CD4-positive, alpha-beta T cell (primary cell): ENCODE measurements at regions of chr12 and their contacts with region 1.

Region 1: GRCh38 chr12:108562348-108563135 is at the start of gene ISCU:
- DNase-seq: peak; percentile 97 to 100 (median 99)
- ATAC-seq: peak; percentile 63
- H3K4me3 ChIP-seq: peak within 1 kb of the TSS; percentile 97
- H3K4me3 Mint-ChIP-seq: peak within 1 kb of the TSS; percentile 99
- H3K27ac ChIP-seq: peak within 1 kb of the TSS; percentile 92 to 94
- H3K27ac Mint-ChIP-seq: peak within 1 kb of the TSS; percentile 96
- H3K4me1 ChIP-seq: peaks cover 63% of the 10 kb centered on the region
- H3K4me1 Mint-ChIP-seq: peaks cover 74% of the 10 kb centered on the region
- H3K27me3 ChIP-seq: no peaks in the 10 kb centered on the region
- H3K27me3 Mint-ChIP-seq: no peaks in the 10 kb centered on the region
- CTCF ChIP-seq: no peak
- total RNA-seq, gene ISCU: 269 to 270 TPM

Region 2: DNA sequence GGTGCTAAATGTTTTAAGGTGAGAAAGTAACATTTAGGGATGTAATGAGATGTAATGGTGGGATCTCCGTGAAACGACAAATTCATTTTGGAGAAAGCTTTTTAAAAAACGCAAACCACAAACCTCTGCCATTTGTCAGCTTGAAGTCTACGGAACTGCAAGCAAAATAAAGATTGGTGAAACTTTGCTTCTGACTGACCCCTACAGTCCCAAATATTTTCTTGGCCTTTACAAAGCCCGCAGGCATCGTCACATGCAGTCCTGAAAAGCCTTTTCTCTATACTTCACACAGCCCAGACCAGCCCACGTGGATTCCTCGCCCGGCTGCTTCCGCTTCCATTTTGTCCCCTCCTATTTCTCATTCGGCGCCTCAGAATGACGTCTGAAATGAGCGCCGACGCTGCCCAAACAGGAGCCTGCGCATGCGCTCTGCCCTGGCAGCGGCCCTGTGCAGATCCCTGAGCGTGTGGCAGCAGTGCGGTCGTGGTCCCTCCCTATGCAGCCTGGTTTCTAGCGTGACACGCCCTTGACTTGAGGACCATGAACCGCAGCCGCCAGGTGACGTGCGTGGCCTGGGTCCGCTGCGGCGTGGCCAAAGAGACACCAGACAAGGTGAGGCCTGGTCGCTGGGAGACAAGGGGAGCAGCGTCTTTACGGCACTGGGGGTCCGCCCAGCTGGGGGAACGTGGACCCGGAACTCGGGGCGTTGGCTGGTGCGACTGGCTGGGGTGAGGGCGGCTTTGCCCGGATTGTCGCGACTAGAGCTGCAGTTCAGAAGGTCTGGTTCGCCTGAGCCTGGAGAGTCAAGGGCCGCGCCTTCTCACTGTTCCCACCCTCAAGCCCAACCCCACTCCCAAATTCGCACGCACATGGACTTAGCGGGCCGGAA is 876.9 kb before region 1 on chr12 and contains the start of gene PWP1:
- CTCF ChIA-PET with region 1: no interaction called
- POLR2A ChIA-PET with region 1: no interaction called
- intact Hi-C with region 1: loop called in 1 of 2 experiments (anchors 5 kb)
- DNase-seq: peak; percentile 91 to 99 (median 94)
- ATAC-seq: peak; percentile 90
- H3K4me3 ChIP-seq: peak within 1 kb of the TSS; percentile 99
- H3K4me3 Mint-ChIP-seq: peak within 1 kb of the TSS; percentile 97
- H3K27ac ChIP-seq: peak within 1 kb of the TSS; percentile 75 to 91
- H3K27ac Mint-ChIP-seq: peak within 1 kb of the TSS; percentile 94
- H3K4me1 ChIP-seq: peaks cover 24% of the 10 kb centered on the region
- H3K4me1 Mint-ChIP-seq: peaks cover 33% of the 10 kb centered on the region
- H3K27me3 ChIP-seq: no peaks in the 10 kb centered on the region
- H3K27me3 Mint-ChIP-seq: no peaks in the 10 kb centered on the region
- CTCF ChIP-seq: no peak
- total RNA-seq, gene PWP1: 24.1 to 24.2 TPM

Region 3: DNA sequence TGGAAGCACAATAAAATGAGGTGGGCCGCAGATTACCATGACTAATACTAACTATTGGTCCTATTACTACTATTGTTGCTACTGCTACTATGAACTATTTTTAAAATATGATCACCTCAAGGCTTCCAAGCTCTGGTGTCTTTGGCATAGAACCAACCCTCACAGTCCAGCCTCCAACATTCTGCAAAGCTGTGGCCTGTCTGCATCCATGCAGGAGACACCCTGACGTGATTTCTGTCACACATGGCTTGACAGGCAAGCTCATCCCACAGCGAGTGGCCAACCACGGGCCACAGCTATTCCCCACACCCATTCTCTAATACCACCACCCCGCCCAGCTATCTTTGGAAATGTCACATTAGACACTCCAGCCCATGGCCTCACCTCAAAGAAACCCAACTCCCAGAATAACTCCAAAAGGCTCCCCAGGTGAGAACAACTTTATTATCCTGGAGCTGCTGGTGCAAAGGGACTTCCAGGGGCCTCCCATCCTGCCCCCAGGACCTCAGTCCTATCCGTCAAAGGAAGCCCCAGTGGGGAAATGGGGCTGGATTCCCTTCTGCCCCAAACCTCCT is 14.2 kb after region 1 on chr12:
- CTCF ChIA-PET with region 1: interaction called, 3 read pairs
- POLR2A ChIA-PET with region 1: interaction called, 16 read pairs
- intact Hi-C with region 1: no loop called
- DNase-seq: no peak
- ATAC-seq: no peak
- H3K4me3 ChIP-seq: no peak overlapping the region
- H3K4me3 Mint-ChIP-seq: no peak overlapping the region
- H3K27ac ChIP-seq: no peak overlapping the region
- H3K27ac Mint-ChIP-seq: peak overlapping the region; percentile 76
- H3K4me1 ChIP-seq: peaks cover 15% of the 10 kb centered on the region
- H3K4me1 Mint-ChIP-seq: peaks cover 45% of the 10 kb centered on the region
- H3K27me3 ChIP-seq: no peaks in the 10 kb centered on the region
- H3K27me3 Mint-ChIP-seq: no peaks in the 10 kb centered on the region
- CTCF ChIP-seq: no peak

Region 4: GRCh38 chr12:108664338-108665258 is 102.1 kb after region 1 on chr12:
- CTCF ChIA-PET with region 1: no interaction called
- POLR2A ChIA-PET with region 1: interaction called, 4 read pairs
- intact Hi-C with region 1: loop called in 1 of 2 experiments (anchors 1 kb)
- DNase-seq: peak; percentile 69 to 90 (median 79)
- ATAC-seq: peak; percentile 100
- H3K4me3 ChIP-seq: no peak overlapping the region
- H3K4me3 Mint-ChIP-seq: no peak overlapping the region
- H3K27ac ChIP-seq: no peak overlapping the region
- H3K27ac Mint-ChIP-seq: peak overlapping the region; percentile 72
- H3K4me1 ChIP-seq: peaks cover 6% of the 10 kb centered on the region
- H3K4me1 Mint-ChIP-seq: peaks cover 7% of the 10 kb centered on the region
- H3K27me3 ChIP-seq: no peaks in the 10 kb centered on the region
- H3K27me3 Mint-ChIP-seq: no peaks in the 10 kb centered on the region
- CTCF ChIP-seq: peak; percentile 91

Region 5: DNA sequence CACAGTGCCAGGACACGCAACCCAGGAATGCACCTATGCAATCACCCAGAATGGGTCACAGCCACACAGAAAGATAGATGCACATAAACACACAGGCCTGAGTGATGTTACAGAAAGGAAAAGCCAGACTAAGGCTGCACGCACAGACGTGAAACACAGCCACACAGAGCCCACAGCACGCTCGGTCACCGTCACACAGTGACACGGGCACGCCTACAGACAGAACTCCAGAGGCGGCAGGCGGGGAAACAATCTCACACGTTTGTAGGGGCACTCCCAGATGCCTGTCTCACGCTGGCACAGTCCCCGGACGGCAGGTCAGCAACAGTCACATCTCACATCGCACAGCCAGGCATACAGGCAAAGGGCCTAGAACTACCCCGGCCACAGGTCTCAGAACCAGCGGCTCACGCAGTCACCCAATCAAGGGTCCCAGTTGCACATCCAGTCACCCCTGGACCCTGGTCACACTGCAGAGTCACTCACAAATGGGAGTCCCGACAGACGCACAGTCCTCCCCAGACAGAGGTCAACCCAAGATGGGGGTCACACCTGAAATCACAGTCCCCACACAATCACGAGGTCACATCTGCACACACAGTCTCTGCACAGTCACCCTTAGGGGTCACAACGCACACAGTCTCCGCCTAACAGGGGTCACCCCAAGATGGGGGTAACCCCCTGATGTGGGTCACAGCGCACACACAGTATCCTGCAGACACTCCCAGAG is 294.1 kb after region 1 on chr12:
- CTCF ChIA-PET with region 1: no interaction called
- POLR2A ChIA-PET with region 1: interaction called, 33 read pairs
- intact Hi-C with region 1: loop called (anchors 2 kb)
- DNase-seq: peak in 13 of 14 experiments; percentile 35 to 92 (median 58)
- ATAC-seq: peak; percentile 75
- H3K4me3 ChIP-seq: peak overlapping the region; percentile 72
- H3K4me3 Mint-ChIP-seq: peak overlapping the region; percentile 95
- H3K27ac ChIP-seq: peak overlapping the region in 1 of 2 donors; percentile 22
- H3K27ac Mint-ChIP-seq: peak overlapping the region; percentile 90
- H3K4me1 ChIP-seq: peaks cover 36% of the 10 kb centered on the region
- H3K4me1 Mint-ChIP-seq: peaks cover 42% of the 10 kb centered on the region
- H3K27me3 ChIP-seq: no peaks in the 10 kb centered on the region
- H3K27me3 Mint-ChIP-seq: no peaks in the 10 kb centered on the region
- CTCF ChIP-seq: no peak

Region 6: DNA sequence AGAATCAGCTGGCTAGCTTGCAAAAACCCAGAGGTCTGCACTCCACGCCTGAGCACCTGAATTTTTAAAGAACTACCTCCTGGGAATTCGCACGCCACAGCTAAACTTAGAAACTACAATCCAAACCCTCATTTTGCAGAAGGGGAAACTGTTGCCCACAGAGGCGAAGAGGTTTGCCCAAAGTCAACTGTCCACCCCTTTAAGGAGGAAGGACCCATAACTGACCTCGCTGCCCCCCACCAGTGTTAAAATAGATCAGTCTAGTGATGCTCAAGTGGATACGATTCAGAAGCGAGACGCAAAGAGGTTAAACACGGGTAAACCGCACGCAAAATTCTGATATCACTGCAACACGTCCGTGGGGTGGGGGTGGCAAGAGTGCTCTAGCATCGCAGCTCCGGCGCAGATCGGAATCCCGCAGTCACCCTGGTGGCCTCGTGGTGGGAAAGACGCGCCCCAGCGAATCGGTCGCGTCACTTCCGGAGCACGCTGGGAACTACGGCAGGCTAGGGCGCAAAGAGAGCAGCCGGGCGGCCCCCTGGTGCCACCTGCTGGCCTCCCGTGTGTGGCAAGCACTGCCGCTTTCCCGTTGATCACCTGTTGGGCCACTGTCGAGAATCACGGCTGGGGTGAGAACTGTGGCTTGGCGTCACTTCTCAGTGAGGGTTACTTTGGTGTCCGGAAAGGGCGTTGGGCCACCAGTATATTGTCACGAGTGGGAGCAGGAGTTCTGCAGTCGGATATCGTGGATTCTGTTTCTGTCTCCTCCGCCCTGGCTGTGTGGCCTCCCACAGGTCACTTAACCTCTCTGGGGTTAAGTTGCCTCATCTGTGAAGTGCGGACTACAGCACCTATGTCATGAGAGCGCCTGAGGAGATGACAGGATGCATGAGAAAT is 530.7 kb after region 1 on chr12 and contains the start of gene ALKBH2:
- CTCF ChIA-PET with region 1: interaction called, 6 read pairs
- POLR2A ChIA-PET with region 1: interaction called, 6 read pairs
- intact Hi-C with region 1: loop called (anchors 2 to 5 kb)
- DNase-seq: peak; percentile 91 to 98 (median 94)
- ATAC-seq: peak; percentile 83
- H3K4me3 ChIP-seq: peak within 1 kb of the TSS; percentile 84
- H3K4me3 Mint-ChIP-seq: peak within 1 kb of the TSS; percentile 91
- H3K27ac ChIP-seq: peak within 1 kb of the TSS; percentile 64 to 66
- H3K27ac Mint-ChIP-seq: peak within 1 kb of the TSS; percentile 87
- H3K4me1 ChIP-seq: peaks cover 41% of the 10 kb centered on the region
- H3K4me1 Mint-ChIP-seq: peaks cover 43% of the 10 kb centered on the region
- H3K27me3 ChIP-seq: no peaks in the 10 kb centered on the region
- H3K27me3 Mint-ChIP-seq: no peaks in the 10 kb centered on the region
- CTCF ChIP-seq: peak; percentile 96
- total RNA-seq, gene ALKBH2: 12.8 to 14.0 TPM